PC-9 (cell line): ENCODE measurements at regions of chr7 and their contacts with region 1.

Region 1: GRCh38 chr7:128948312-128948973 is 10.7 kb downstream of the IRF5 start:
- DNase-seq: no peak
- H3K4me3 ChIP-seq: no peak overlapping the region
- H3K27ac ChIP-seq: no peak overlapping the region
- H3K4me1 ChIP-seq: no peaks in the 10 kb centered on the region
- H3K27me3 ChIP-seq: no peaks in the 10 kb centered on the region
- CTCF ChIP-seq: no peak

Region 2: GRCh38 chr7:128830231-128831177 is 117.9 kb before region 1 on chr7 and contains the start of gene FLNC:
- CTCF ChIA-PET with region 1: no interaction called
- POLR2A ChIA-PET with region 1: no interaction called
- intact Hi-C with region 1: no loop called
- DNase-seq: peak in 1 of 2 experiments; percentile 60
- H3K4me3 ChIP-seq: peak within 1 kb of the TSS; percentile 54; the same call in 1 of the 2 replicates
- H3K27ac ChIP-seq: no peak within 1 kb of the TSS
- H3K4me1 ChIP-seq: peaks cover 52% of the 10 kb centered on the region
- H3K27me3 ChIP-seq: no peaks in the 10 kb centered on the region
- CTCF ChIP-seq: no peak
- total RNA-seq, gene FLNC: 75.5 and 96.6 TPM in 2 replicates

Region 3: GRCh38 chr7:129343099-129343700 is 394.8 kb after region 1 on chr7:
- CTCF ChIA-PET with region 1: interaction called, 12 read pairs
- POLR2A ChIA-PET with region 1: no interaction called
- intact Hi-C with region 1: no loop called
- DNase-seq: peak; percentile 9 to 52
- H3K4me3 ChIP-seq: no peak overlapping the region
- H3K27ac ChIP-seq: no peak overlapping the region
- H3K4me1 ChIP-seq: peaks cover 8% of the 10 kb centered on the region
- H3K27me3 ChIP-seq: no peaks in the 10 kb centered on the region
- CTCF ChIP-seq: peak; percentile 85